Posterior vena cava (tissue), 2 donors: ENCODE measurements at regions of chr2 and their contacts with region 1.

Region 1: GRCh38 chr2:162030363-162031190 is 43.4 kb downstream of the DPP4 start:
- DNase-seq: no peak

Region 2: GRCh38 chr2:161995553-161996016 is 35.0 kb before region 1 on chr2:
- intact Hi-C with region 1: loop called in 1 of 2 experiments (anchors 1 kb)
- DNase-seq: no peak